MCF 10A (cell line): ENCODE measurements at regions of chr1 and their contacts with region 1.

Region 1: GRCh38 chr1:15847100-15847892 is at the start of gene SPEN:
- DNase-seq: peak; percentile 97
- H3K4me3 Mint-ChIP-seq: peak within 1 kb of the TSS; percentile 82
- H3K27ac Mint-ChIP-seq: peak within 1 kb of the TSS; percentile 97
- H3K4me1 Mint-ChIP-seq: peaks cover 19% of the 10 kb centered on the region
- H3K27me3 Mint-ChIP-seq: no peaks in the 10 kb centered on the region
- CTCF ChIP-seq: no peak
- total RNA-seq, gene SPEN: 44.2 and 50.6 TPM in 2 replicates

Region 2: DNA sequence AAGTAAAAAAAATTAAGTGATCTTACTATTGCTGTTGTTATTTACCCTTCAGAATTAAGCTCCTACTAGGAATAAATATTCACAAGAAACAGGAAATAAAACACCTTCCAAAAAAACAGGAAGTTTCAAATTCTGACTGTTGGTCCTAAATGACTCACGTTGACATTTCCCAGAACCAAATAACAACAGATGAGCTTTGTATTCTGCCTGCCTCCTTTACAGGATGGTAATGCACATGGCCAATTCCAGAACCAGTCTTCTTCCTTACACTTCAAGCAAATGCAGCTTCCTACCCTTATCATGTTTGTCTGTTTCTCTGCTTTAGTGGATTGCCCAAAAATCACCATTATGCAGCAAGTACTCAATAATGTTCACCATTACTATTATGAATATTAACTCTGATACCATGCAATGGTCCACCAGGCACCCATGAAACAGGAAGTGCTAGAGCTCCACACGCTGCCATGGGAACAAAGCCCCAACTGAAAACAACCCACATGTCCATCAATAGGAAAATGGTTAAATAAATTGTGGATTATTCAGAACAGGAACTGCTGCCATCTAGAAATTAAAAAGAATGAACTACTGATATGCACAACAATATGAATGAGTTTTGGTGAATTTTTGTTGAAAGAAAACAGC is 332.2 kb before region 1 on chr1:
- CTCF ChIA-PET with region 1: no interaction called
- POLR2A ChIA-PET with region 1: no interaction called
- intact Hi-C with region 1: no loop called
- DNase-seq: no peak
- H3K4me3 Mint-ChIP-seq: no peak overlapping the region
- H3K27ac Mint-ChIP-seq: no peak overlapping the region
- H3K4me1 Mint-ChIP-seq: peaks cover 8% of the 10 kb centered on the region
- H3K27me3 Mint-ChIP-seq: no peaks in the 10 kb centered on the region
- CTCF ChIP-seq: no peak

Region 3: GRCh38 chr1:15617175-15617880 is 230.0 kb before region 1 on chr1 and contains the start of gene DDI2:
- CTCF ChIA-PET with region 1: no interaction called
- POLR2A ChIA-PET with region 1: interaction called, 10 read pairs
- intact Hi-C with region 1: no loop called
- DNase-seq: peak; percentile 99
- H3K4me3 Mint-ChIP-seq: peak within 1 kb of the TSS; percentile 75
- H3K27ac Mint-ChIP-seq: peak within 1 kb of the TSS; percentile 86
- H3K4me1 Mint-ChIP-seq: peaks cover 28% of the 10 kb centered on the region
- H3K27me3 Mint-ChIP-seq: no peaks in the 10 kb centered on the region
- CTCF ChIP-seq: no peak
- total RNA-seq, gene DDI2: 26.6 and 32.7 TPM in 2 replicates

Region 4: GRCh38 chr1:15803354-15803753 is 43.9 kb before region 1 on chr1:
- CTCF ChIA-PET with region 1: interaction called, 6 read pairs
- POLR2A ChIA-PET with region 1: interaction called, 75 read pairs
- intact Hi-C with region 1: loop called (anchors 5 kb)
- DNase-seq: peak; percentile 54
- H3K4me3 Mint-ChIP-seq: no peak overlapping the region
- H3K27ac Mint-ChIP-seq: no peak overlapping the region
- H3K4me1 Mint-ChIP-seq: peaks cover 38% of the 10 kb centered on the region
- H3K27me3 Mint-ChIP-seq: no peaks in the 10 kb centered on the region
- CTCF ChIP-seq: peak; percentile 36

Region 5: DNA sequence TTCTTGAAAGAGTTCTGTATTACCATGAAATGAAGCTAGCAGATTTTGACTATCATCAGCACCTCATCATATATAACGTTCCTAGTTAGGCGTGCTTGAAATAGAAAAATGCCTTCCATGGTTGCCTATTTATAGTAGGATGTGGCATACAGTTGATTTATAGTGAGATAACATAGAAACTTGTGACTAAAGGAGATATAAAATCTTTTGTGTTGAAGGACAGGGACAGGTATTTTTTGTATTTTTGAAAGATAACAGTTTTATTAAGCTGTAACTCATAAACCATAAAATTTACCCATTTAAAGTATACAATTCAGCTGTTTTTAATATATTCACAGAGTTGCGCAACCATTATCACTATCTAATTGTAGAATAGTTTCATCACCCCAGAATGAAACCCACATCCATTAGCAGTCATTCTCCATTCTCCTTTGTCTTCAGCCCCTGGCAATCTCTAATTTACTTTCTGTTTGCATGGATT is 19.5 kb after region 1 on chr1:
- CTCF ChIA-PET with region 1: interaction called, 7 read pairs
- POLR2A ChIA-PET with region 1: interaction called, 31 read pairs
- intact Hi-C with region 1: no loop called
- DNase-seq: no peak
- H3K4me3 Mint-ChIP-seq: no peak overlapping the region
- H3K27ac Mint-ChIP-seq: peak overlapping the region; percentile 73
- H3K4me1 Mint-ChIP-seq: peaks cover 21% of the 10 kb centered on the region
- H3K27me3 Mint-ChIP-seq: no peaks in the 10 kb centered on the region
- CTCF ChIP-seq: no peak

Region 6: DNA sequence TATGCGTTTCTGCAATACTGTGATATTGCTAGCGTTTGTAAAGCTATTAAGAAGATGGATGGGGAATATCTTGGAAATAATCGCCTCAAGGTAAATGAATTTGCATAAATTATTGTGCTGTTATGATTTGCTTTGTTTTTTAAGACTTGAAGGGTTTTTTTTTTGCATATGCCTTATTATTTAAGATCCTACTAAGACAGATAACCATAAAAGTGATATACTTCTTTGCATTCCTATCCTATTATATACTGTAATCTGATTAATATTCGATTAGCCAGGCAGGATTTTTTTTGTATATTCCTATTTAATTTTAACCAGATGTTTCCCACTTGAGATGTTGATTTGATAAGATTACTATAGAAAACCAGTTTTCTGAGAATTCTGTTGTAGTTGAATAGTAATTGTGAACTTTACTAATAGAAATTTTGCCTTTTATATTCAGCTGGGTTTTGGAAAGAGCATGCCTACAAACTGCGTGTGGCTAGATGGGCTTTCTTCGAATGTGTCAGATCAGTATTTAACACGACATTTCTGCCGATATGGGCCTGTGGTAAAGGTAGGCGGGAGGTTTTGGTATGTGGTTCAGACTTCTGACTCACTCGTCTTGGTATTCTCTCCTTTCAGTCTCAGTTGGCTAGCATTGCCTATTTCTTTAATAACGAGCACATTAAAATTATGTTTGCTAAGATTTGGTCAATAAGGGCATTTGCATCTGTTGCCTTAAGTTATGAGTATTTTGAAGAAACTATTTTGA is 71.8 kb after region 1 on chr1:
- CTCF ChIA-PET with region 1: interaction called, 3 read pairs
- POLR2A ChIA-PET with region 1: interaction called, 37 read pairs
- intact Hi-C with region 1: loop called (anchors 5 kb)
- DNase-seq: peak; percentile 79
- H3K4me3 Mint-ChIP-seq: peak overlapping the region; percentile 5
- H3K27ac Mint-ChIP-seq: peak overlapping the region; percentile 41
- H3K4me1 Mint-ChIP-seq: peaks cover 23% of the 10 kb centered on the region
- H3K27me3 Mint-ChIP-seq: no peaks in the 10 kb centered on the region
- CTCF ChIP-seq: no peak

Region 7: DNA sequence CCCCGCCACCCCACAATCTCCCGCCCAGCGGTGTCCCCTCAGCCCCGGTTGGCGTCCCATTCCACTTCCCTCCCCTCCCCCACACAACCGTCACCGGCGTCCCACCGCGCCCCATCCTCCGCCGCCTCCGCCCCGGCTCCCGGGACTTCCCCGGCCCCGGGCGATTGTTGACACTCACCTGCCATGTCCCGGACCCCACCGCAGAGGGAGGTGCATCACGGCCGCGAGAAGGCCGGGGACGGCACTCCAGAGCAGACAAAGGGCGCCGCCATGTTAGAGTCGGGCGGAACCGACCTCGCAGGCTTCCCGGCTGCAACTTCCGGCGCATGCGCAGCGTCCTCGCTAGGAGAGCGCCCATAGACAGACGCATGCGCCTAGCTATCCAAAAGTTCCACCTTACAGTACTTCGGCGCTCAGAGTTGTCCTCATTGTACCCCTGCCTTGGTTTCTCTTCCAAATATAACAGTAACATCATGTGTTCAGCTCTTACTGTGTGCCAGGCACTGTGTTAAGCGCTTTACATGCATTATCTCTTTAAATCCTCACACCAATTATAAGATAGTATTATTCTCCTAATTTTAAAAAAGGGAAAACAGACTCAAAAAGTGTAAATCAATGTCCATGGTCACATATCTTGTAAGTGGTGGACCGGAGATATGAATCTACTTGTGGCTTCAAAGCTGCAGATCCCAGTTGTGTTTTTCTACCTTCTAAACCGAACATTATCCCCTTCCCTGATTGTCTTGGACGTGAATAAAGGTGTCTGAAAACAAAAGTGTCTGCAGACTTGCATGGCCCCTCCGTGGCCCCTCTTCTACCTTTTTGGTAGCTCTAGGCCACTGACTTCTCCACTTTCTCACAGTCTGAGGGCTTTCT is 128.7 kb after region 1 on chr1 and contains the start of gene ZBTB17:
- CTCF ChIA-PET with region 1: no interaction called
- POLR2A ChIA-PET with region 1: interaction called, 15 read pairs
- intact Hi-C with region 1: no loop called
- DNase-seq: peak; percentile 91
- H3K4me3 Mint-ChIP-seq: peak within 1 kb of the TSS; percentile 77
- H3K27ac Mint-ChIP-seq: peak within 1 kb of the TSS; percentile 67
- H3K4me1 Mint-ChIP-seq: peaks cover 15% of the 10 kb centered on the region
- H3K27me3 Mint-ChIP-seq: no peaks in the 10 kb centered on the region
- CTCF ChIP-seq: no peak
- total RNA-seq, gene ZBTB17: 46.3 and 48.3 TPM in 2 replicates

Region 8: DNA sequence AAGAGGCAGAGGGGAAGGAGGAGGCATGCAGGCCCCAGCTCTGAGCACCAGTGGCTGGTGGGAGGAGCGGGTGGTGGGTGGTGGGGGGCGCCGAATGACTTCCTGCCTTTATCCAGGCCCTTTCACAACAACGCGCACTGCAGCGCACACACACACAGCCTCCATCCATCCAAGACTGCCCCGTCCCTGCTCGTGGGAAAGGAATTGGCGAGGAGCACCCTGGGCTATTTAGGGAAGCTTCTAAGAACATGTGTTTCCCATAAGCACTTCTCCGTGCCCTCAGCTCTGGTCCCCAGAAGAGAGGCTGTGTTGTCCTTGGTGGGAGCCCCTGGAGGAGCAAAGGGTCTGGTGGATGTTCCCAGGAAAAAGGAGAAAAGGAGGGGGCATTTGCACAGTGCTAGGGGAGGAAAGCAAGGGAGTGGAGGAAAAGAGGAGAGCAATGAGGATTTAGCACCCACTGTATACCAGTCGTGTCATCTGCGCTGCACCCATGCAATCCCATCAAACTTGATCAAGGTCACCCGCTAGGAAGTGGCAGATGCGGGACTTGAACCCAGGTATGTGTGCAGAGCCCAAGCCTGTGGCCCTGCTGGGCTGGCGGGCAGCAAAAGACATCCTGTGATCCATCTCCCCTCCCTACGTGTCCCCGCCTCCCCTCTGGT is 280.5 kb after region 1 on chr1:
- CTCF ChIA-PET with region 1: no interaction called
- POLR2A ChIA-PET with region 1: no interaction called
- intact Hi-C with region 1: no loop called
- DNase-seq: no peak
- H3K4me3 Mint-ChIP-seq: no peak overlapping the region
- H3K27ac Mint-ChIP-seq: no peak overlapping the region
- H3K4me1 Mint-ChIP-seq: peaks cover 38% of the 10 kb centered on the region
- H3K27me3 Mint-ChIP-seq: no peaks in the 10 kb centered on the region
- CTCF ChIP-seq: no peak